IMR-90 (cell line): ENCODE measurements at regions of chr15 and their contacts with region 1.

Region 1: DNA sequence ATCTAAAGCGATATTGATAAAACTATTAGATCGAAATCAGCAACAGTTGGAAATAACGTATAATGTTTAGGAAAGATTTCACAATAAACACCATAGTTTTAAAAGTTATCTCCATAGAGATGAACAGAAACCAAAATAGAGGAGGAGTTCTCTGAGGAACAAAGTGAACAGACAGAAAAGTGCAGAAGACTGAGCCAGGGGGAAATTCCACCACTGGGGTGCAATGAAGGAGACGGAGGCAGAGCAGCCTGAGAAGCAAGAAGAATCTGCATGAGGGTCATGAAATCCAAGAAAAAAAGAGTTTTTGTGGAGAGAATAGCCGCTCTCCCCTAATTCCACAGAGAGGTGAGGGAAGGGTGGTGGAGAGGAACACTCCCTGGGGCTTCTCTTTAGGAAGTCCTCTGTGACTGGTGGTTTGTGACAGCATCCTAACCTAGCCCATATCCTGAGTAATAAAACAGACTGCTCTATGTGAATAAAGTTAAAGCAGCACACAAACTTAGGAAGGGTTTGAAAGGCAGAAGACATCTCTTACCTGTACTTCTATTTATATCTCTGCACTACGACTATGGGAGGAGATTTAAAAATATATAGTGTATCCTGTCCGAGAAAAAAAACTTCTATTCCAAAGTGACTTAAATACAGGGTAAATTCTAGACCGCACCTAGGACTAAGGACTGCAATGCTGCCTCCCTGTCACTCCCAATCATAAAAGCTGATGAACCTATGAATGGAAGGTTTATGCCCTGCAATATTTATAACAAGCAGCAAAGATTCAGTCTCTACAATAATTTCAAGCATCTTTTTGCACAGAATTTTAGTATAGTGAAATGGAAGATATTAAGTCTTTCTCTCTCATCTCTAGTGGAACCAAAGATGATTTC is 22.9 kb downstream of the ATP8B4 start:
- DNase-seq: no peak
- ATAC-seq: no peak
- H3K4me3 ChIP-seq: no peak overlapping the region
- H3K27ac ChIP-seq: no peak overlapping the region
- H3K4me1 ChIP-seq: no peaks in the 10 kb centered on the region
- H3K27me3 ChIP-seq: no peaks in the 10 kb centered on the region
- CTCF ChIP-seq: no peak
- POLR2A ChIP-seq: no peak
- RAD21 ChIP-seq: no peak

Region 2: GRCh38 chr15:50075319-50075718 is 20.9 kb before region 1 on chr15:
- CTCF ChIA-PET with region 1: interaction called, 3 read pairs
- POLR2A ChIA-PET with region 1: no interaction called
- dilution Hi-C with region 1: no loop called
- in situ Hi-C with region 1: no loop called
- intact Hi-C with region 1: loop called (anchors 2 kb)
- DNase-seq: no peak
- ATAC-seq: no peak
- H3K4me3 ChIP-seq: no peak overlapping the region
- H3K27ac ChIP-seq: no peak overlapping the region
- H3K4me1 ChIP-seq: no peaks in the 10 kb centered on the region
- H3K27me3 ChIP-seq: no peaks in the 10 kb centered on the region; the same call in 1 of the 2 replicates
- CTCF ChIP-seq: no peak
- POLR2A ChIP-seq: no peak
- RAD21 ChIP-seq: no peak

Region 3: DNA sequence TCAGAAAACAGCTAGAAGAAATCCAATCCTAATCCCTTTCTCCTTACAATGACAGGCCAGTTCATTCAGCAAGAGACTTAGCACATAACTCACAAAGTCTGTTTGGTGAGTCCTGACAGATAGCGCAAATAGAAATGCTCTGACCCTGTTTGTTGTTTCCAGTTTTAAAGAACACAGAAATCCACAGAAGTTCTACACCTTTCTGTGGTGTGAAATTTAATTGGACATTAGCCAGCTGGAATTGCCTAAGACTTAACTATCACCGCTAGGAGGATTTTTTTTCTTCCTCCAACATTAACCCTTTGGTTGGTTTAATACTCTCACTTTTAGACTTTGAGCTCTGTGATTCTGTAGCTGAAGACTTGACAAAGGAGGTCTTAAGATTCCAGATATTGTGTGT is 138.6 kb after region 1 on chr15:
- CTCF ChIA-PET with region 1: no interaction called
- POLR2A ChIA-PET with region 1: no interaction called
- dilution Hi-C with region 1: no loop called
- in situ Hi-C with region 1: no loop called
- intact Hi-C with region 1: no loop called
- DNase-seq: no peak
- ATAC-seq: no peak
- H3K4me3 ChIP-seq: no peak overlapping the region
- H3K27ac ChIP-seq: no peak overlapping the region
- H3K4me1 ChIP-seq: no peaks in the 10 kb centered on the region
- H3K27me3 ChIP-seq: no peaks in the 10 kb centered on the region
- CTCF ChIP-seq: no peak
- POLR2A ChIP-seq: no peak
- RAD21 ChIP-seq: no peak

Region 4: DNA sequence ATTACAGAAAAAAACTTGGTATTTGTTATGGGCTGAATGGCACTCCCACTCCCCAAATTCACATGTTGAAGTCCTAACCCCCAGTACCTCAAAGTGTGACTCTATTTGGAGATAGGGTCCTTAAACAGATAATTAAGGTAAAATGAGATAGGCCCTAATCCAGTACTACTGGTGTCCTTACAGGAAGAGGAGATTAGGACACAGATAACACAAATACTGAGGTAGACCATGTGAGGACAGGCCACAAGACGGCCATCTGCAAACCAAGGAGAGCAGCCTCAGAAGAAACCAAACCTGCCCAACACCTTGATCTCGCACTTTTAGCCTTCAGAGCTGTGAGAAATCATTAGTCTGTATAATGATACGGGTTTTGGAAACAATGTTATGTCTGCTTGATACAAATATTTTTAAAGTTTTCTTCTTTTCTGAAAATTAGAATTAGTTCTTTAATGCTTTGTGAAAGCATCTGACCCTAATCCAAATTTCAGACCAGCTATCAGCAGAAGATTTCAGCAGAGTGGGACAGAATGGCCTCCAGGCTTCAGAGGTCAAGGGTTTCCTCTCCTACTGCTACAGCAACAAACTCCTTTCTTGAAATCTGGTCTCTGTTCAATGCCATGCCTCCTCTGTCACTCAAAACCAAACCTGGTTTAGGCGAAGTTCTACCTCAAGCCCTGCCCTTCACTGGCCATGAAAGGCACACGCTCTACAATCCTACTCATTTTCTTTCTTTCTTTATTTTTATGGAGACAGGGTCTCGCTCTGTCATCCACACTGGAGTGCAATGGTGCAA is 191.3 kb after region 1 on chr15:
- CTCF ChIA-PET with region 1: no interaction called
- POLR2A ChIA-PET with region 1: no interaction called
- dilution Hi-C with region 1: no loop called
- in situ Hi-C with region 1: no loop called
- intact Hi-C with region 1: no loop called
- DNase-seq: no peak
- ATAC-seq: no peak
- H3K4me3 ChIP-seq: no peak overlapping the region
- H3K27ac ChIP-seq: no peak overlapping the region
- H3K4me1 ChIP-seq: no peaks in the 10 kb centered on the region
- H3K27me3 ChIP-seq: no peaks in the 10 kb centered on the region
- CTCF ChIP-seq: no peak
- POLR2A ChIP-seq: no peak
- RAD21 ChIP-seq: no peak